Activated T-helper 2 cell treated with anti-CD3 and anti-CD28 coated beads, Interferon-gamma antibody, Interleukin-2, Interleukin-4, amounts not matched to agents 10 μg/mL and 5 μg/mL and 100 μg/mL, durations not matched to agents 14 hours and 24 hours and 36 hours (primary cell): ENCODE measurements at regions of chr1 and their contacts with region 1.

Region 1: GRCh38 chr1:151281969-151282882 is at the start of gene ZNF687:
- DNase-seq: peak; percentile 99
- H3K4me3 Mint-ChIP-seq: peak within 1 kb of the TSS; percentile 99
- H3K27ac Mint-ChIP-seq: peak within 1 kb of the TSS; percentile 99
- H3K4me1 Mint-ChIP-seq: peaks cover 28% of the 10 kb centered on the region
- H3K27me3 Mint-ChIP-seq: no peaks in the 10 kb centered on the region
- total RNA-seq, gene ZNF687: 25.0 and 25.3 TPM in 2 replicates

Region 2: DNA sequence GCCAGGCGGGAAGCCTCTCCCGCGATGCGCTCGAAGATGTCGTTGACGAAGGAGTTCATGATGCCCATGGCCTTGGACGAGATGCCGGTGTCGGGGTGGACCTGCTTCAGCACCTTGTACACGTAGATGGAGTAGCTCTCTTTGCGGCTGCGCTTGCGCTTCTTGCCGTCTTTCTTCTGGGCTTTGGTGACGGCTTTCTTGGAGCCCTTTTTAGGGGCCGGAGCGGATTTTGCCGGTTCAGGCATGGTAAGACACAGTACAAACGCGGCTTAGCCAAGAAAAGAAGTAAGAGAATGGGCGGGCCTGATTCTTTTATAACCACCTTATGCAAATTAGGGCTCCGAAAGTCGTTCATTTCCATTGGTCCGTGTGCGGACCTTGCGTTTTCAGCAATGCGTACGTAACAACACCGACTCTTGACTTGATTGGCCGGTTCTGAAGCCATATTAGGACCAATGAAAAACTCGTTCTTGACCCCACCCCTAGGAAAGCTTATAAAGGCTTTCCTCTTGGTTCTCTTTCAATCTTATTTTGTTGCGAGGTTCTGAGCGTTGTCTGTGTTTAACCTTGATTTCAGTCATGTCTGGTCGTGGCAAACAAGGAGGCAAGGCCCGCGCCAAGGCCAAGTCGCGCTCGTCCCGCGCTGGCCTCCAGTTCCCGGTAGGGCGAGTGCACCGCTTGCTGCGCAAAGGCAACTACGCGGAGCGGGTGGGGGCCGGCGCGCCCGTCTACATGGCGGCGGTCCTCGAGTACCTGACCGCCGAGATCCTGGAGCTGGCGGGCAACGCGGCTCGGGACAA is 1395.6 kb before region 1 on chr1:
- intact Hi-C with region 1: loop called (anchors 10 kb)
- DNase-seq: peak; percentile 90
- H3K4me3 Mint-ChIP-seq: no peak overlapping the region
- H3K27ac Mint-ChIP-seq: no peak overlapping the region
- H3K4me1 Mint-ChIP-seq: peaks cover 13% of the 10 kb centered on the region
- H3K27me3 Mint-ChIP-seq: no peaks in the 10 kb centered on the region

Region 3: DNA sequence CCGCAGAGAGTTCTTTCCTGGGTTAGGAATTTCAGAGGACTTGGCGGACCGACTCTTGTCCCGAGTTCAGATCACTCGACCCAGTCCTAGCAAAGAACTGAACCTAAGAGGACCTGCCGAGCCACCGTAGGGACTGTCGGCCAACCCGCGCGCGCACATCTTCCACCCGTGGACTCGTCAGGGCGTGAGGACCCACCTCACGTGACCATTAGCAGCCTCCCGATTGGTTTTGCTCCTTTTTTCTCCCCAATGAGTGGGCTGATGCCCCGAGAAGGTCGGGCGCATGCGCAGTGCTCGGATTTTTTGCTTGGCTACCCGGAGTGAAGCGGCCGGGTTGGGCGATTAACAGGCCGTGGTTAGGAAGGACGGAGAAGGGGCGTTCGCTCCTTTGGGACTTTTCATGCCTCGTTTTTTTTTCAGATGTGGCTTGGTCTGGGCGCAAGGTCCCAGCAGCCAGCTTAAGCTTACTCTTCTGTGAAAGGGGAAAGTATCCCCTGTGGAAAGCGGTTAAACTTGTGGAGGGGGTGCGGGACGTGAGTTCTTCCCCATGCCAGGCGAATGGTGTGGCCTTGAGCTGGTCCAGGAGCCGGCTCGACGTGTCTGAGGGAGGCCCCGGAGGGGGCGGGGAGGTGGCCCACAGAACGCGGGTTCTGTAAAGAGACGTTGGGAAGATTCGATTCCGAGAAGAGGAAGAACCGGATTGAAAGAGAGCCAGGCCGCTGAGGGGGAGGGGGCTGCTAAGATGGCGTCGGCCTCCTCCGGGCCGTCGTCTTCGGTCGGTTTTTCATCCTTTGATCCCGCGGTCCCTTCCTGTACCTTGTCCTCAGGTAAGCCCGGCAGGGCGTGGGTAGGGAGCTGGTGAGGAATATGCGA is 83.7 kb before region 1 on chr1 and contains the start of gene PIP5K1A:
- intact Hi-C with region 1: loop called (anchors 1 kb)
- DNase-seq: peak; percentile 97
- H3K4me3 Mint-ChIP-seq: peak within 1 kb of the TSS; percentile 99
- H3K27ac Mint-ChIP-seq: peak within 1 kb of the TSS; percentile 93
- H3K4me1 Mint-ChIP-seq: peaks cover 28% of the 10 kb centered on the region
- H3K27me3 Mint-ChIP-seq: peaks cover 3% of the 10 kb centered on the region
- total RNA-seq, gene PIP5K1A: 82.2 and 83.9 TPM in 2 replicates

Region 4: GRCh38 chr1:151210830-151211229 is 71.4 kb before region 1 on chr1:
- intact Hi-C with region 1: no loop called
- DNase-seq: no peak
- H3K4me3 Mint-ChIP-seq: no peak overlapping the region
- H3K27ac Mint-ChIP-seq: peak overlapping the region; percentile 67
- H3K4me1 Mint-ChIP-seq: peaks cover 23% of the 10 kb centered on the region
- H3K27me3 Mint-ChIP-seq: no peaks in the 10 kb centered on the region

Region 5: GRCh38 chr1:151327223-151327902 is 45.1 kb after region 1 on chr1 and contains the start of gene PI4KB:
- intact Hi-C with region 1: loop called (anchors 1 kb)
- DNase-seq: peak; percentile 88
- H3K4me3 Mint-ChIP-seq: peak within 1 kb of the TSS; percentile 93
- H3K27ac Mint-ChIP-seq: peak within 1 kb of the TSS; percentile 98
- H3K4me1 Mint-ChIP-seq: peaks cover 33% of the 10 kb centered on the region
- H3K27me3 Mint-ChIP-seq: no peaks in the 10 kb centered on the region
- total RNA-seq, gene PI4KB: 53.6 and 57.3 TPM in 2 replicates

Region 6: GRCh38 chr1:151372061-151372934 is 90.1 kb after region 1 on chr1 and contains the start of gene SELENBP1:
- intact Hi-C with region 1: no loop called
- DNase-seq: no peak
- H3K4me3 Mint-ChIP-seq: no peak within 1 kb of the TSS
- H3K27ac Mint-ChIP-seq: no peak within 1 kb of the TSS
- H3K4me1 Mint-ChIP-seq: no peaks in the 10 kb centered on the region
- H3K27me3 Mint-ChIP-seq: peaks cover 2% of the 10 kb centered on the region
- total RNA-seq, gene SELENBP1: not detected in 2 replicates

Region 7: DNA sequence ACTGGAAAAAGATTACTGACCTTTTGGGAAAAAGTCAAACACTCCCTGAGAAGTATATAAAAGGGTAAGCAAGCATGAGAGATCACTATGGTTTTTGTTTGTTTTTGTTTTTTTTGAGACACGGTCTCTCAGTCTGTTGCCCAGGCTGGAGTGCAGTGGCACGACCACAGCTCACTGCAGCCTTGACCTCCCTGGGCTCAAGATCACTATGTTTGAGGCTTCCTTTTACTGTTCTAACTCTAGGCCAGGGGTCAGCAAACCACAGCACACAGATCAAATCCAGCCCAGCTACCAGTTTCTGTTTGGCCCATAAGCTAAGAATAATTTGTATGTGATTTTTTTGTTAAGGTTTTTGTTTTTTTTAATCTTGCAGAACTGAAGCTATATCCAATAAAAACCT is 142.9 kb after region 1 on chr1:
- intact Hi-C with region 1: no loop called
- DNase-seq: no peak
- H3K4me3 Mint-ChIP-seq: no peak overlapping the region
- H3K27ac Mint-ChIP-seq: no peak overlapping the region
- H3K4me1 Mint-ChIP-seq: peaks cover under 1% of the 10 kb centered on the region
- H3K27me3 Mint-ChIP-seq: no peaks in the 10 kb centered on the region

Region 8: DNA sequence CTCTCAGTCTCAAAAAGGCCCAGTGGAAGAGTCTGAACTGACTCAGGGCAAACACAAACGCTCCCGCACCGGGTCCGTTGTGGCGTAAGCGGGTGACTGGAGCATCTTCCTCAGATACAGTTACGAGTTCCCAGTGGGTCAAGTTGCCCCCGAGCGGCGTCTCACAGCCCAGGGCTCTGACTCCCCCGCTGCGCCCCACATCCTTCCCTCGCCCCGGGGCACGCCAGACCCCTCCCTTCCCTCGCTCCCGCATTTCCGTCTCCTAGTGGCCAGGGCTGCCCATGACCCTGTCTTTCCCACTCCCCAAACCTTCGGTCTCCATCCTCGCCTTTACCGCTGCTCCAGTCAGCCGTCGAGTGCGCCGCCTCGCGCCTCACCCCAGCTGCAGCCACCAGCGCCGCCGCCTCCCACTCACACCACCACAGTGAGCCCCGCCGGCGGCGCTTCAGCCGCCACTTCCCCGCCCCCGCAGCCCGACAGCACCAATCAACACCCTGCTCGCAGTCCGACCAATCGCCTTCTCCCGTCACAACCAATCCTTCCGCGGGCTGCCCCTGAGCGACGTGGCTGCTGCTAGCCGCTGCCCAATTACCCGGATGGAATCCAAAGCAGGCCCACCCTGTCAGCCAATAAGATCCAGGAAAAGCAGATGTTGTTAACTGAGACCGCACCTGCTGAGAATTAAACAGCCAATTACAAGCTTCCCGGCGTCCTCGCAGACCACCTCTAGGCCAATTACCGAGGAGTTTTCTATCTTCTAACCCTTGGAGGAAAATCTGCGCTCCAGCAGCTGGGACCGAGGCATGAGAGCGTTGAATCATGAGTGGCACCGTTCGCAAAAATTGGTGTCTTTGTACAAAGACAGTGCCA is 508.1 kb after region 1 on chr1 and contains the start of gene TDRKH:
- intact Hi-C with region 1: loop called (anchors 5 kb)
- DNase-seq: peak; percentile 99
- H3K4me3 Mint-ChIP-seq: peak within 1 kb of the TSS; percentile 99
- H3K27ac Mint-ChIP-seq: peak within 1 kb of the TSS; percentile 91
- H3K4me1 Mint-ChIP-seq: peaks cover 24% of the 10 kb centered on the region
- H3K27me3 Mint-ChIP-seq: peaks cover 1% of the 10 kb centered on the region
- total RNA-seq, gene TDRKH: 18.2 and 18.4 TPM in 2 replicates